Ovary (tissue), 10 donors: ENCODE measurements at regions of chr7 and their contacts with region 1.

Region 1: GRCh38 chr7:128462460-128462859 is 6.8 kb downstream of the HILPDA start:
- DNase-seq: no peak
- H3K4me3 ChIP-seq: no peak overlapping the region
- H3K27ac ChIP-seq: no peak overlapping the region
- H3K4me1 ChIP-seq: peaks cover 1% of the 10 kb centered on the region
- H3K27me3 ChIP-seq: no peaks in the 10 kb centered on the region
- CTCF ChIP-seq: no peak
- EP300 ChIP-seq: no peak
- POLR2A ChIP-seq: no peak

Region 2: DNA sequence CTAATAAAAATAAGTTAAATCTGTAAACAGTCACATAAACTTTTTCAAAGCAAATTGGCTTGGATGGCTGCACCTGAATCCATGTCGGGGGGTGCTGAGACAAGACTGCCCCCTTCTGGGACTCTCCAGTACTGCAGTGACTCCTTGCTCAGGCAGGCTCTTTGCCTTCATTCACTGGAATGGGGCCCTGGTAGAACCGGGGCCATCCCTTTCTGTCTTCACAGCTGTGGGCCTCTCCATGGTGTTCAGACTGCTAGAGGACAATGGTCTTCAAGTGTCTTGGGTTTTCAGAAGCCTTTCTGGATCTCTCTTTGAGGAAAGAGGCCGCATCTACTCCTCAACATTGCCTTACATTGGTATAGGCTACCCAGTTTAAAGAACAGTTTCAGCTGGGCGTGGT is 36.6 kb before region 1 on chr7:
- intact Hi-C with region 1: loop called (anchors 2 to 5 kb)
- DNase-seq: peak; percentile 57 to 80 (median 77)
- H3K4me3 ChIP-seq: no peak overlapping the region
- H3K27ac ChIP-seq: no peak overlapping the region
- H3K4me1 ChIP-seq: peaks cover 6% of the 10 kb centered on the region
- H3K27me3 ChIP-seq: no peaks in the 10 kb centered on the region
- CTCF ChIP-seq: peak; percentile 39 to 75 (median 55)
- EP300 ChIP-seq: no peak
- POLR2A ChIP-seq: no peak

Region 3: GRCh38 chr7:128530855-128531104 is 68.3 kb after region 1 on chr7:
- intact Hi-C with region 1: no loop called
- DNase-seq: no peak
- H3K4me3 ChIP-seq: peak overlapping the region; percentile 77
- H3K27ac ChIP-seq: peak overlapping the region; percentile 96 to 100
- H3K4me1 ChIP-seq: no peaks in the 10 kb centered on the region
- H3K27me3 ChIP-seq: no peaks in the 10 kb centered on the region
- CTCF ChIP-seq: no peak
- EP300 ChIP-seq: no peak
- POLR2A ChIP-seq: no peak

Region 4: DNA sequence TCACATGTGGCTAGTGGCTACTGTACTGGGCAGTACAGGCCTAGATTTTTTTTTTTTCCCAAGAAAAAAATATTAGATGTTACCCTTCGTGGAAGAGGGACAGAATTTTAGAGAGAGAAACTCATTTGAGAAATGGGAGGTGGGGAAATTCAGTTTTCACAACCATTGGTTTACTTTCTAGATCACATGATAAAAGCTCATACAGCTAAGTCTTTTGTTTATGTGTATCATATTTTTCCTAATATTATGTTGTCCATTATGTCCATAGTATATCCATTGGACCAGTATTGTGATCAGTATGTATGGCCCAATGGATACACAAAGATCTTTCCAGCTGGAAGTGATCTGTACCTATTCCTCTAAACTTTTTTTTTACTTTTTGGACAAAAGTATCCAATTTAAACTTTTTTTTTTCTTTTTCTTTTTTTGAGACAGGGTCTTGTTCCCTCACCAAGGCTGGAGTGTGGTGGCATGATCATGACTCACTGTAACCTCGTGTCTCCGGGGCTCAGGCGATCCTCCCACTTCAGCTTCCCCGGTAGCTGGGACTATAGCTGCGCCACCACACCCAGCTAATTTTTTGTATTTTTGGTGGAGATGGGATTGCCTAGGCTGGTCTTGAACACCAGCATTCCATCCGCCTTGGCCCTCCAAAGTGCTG is 280.8 kb after region 1 on chr7:
- intact Hi-C with region 1: no loop called
- DNase-seq: no peak
- H3K4me3 ChIP-seq: no peak overlapping the region
- H3K27ac ChIP-seq: no peak overlapping the region
- H3K4me1 ChIP-seq: peaks cover 5% of the 10 kb centered on the region
- H3K27me3 ChIP-seq: no peaks in the 10 kb centered on the region
- CTCF ChIP-seq: no peak
- EP300 ChIP-seq: no peak
- POLR2A ChIP-seq: no peak